ENCODE measurements at regions of chr1 and their contacts with region 1.

Region 1: DNA sequence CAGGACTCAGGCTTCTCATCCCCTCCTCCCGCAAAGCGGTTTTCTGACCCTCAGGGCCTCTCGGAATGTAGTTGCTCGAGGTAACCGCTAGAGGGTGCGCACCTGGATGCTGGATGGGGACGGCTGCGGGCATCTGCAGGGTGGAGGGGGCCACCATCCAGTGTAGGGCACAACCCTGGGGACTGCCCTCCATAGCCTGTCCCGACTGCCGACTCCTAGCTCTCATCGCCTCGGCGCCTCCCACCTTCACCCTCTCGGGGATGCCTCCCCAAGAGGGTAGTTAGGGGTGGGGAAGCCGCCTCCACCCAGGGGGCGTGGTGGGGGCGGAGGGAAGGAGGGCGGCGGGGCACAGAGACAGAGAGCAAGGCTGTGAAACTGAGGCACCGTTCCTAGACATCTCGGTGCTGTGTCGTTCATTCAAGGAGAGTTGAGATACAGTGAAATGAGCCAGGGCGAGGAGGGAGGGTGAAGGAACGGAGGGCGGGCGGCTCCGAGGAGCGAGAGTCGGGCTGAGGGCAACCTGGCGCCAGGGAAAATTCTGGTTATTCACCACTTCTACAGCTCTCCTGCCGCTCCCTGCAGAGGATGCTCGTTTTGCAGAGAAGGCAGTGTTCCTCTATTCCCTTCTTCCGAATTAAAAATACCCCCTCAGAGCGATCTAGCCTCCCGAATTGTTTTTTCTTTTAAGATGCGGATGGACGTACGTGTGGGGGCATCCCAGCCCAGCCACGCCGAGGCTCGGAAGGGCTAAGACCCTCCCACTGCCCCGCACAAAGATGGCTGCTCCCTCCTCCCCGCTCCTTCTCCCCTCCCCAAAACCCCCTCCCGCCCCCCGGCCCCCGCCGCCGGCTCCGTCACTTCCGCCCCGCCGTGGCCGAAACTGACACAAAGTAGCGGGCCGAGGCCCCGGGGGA is at the start of gene ATP8B2:
- DNase-seq: peak; percentile 74
- H3K4me3 Mint-ChIP-seq: peak within 1 kb of the TSS; percentile 96
- H3K27ac Mint-ChIP-seq: peak within 1 kb of the TSS; percentile 89
- H3K4me1 Mint-ChIP-seq: peaks cover 35% of the 10 kb centered on the region
- H3K27me3 Mint-ChIP-seq: peaks cover 22% of the 10 kb centered on the region
- total RNA-seq, gene ATP8B2: 50.1 and 54.9 TPM in 2 replicates

Region 2: GRCh38 chr1:154304664-154305337 is 20.1 kb before region 1 on chr1:
- intact Hi-C with region 1: no loop called
- DNase-seq: no peak
- H3K4me3 Mint-ChIP-seq: no peak overlapping the region
- H3K27ac Mint-ChIP-seq: no peak overlapping the region
- H3K4me1 Mint-ChIP-seq: peaks cover 19% of the 10 kb centered on the region
- H3K27me3 Mint-ChIP-seq: no peaks in the 10 kb centered on the region

Region 3: GRCh38 chr1:154344977-154345837 is 20.3 kb after region 1 on chr1:
- intact Hi-C with region 1: loop called (anchors 2 kb)
- DNase-seq: peak; percentile 44
- H3K4me3 Mint-ChIP-seq: peak overlapping the region; percentile 63
- H3K27ac Mint-ChIP-seq: peak overlapping the region; percentile 67
- H3K4me1 Mint-ChIP-seq: peaks cover 54% of the 10 kb centered on the region
- H3K27me3 Mint-ChIP-seq: no peaks in the 10 kb centered on the region

Region 4: GRCh38 chr1:154609398-154610380 is 284.8 kb after region 1 on chr1:
- intact Hi-C with region 1: no loop called
- DNase-seq: peak; percentile 43
- H3K4me3 Mint-ChIP-seq: peak overlapping the region; percentile 94
- H3K27ac Mint-ChIP-seq: peak overlapping the region; percentile 98
- H3K4me1 Mint-ChIP-seq: peaks cover 63% of the 10 kb centered on the region
- H3K27me3 Mint-ChIP-seq: no peaks in the 10 kb centered on the region